CD4-positive, alpha-beta memory T cell (primary cell): ENCODE measurements at regions of chr2 and their contacts with region 1.

Region 1: DNA sequence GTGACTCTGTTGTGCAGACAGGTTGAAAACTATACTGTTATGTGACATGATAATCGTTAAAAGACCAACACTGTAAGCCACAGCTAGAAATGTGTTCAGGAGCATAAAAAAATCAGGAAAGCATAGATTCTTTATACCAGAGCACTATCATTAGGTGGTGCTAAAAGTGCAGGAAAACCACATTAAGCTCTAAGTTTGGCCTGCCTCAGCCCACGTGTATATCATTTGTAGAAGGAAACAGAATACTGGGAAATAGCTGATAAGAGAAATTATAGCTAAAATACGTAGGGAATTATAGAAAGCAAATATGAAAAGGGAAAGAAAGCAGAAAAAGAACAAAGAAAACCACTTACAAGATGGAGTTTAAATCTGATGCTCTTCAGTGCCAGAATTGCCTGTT is 26.5 kb upstream of the C2orf74 start:
- DNase-seq: peak in 4 of 5 donors; percentile 5 to 17 (median 10)
- H3K4me3 ChIP-seq: no peak overlapping the region
- H3K4me3 Mint-ChIP-seq: no peak overlapping the region
- H3K27ac ChIP-seq: no peak overlapping the region
- H3K27ac Mint-ChIP-seq: peak overlapping the region in 1 of 7 donors; percentile 62
- H3K4me1 ChIP-seq: no peaks in the 10 kb centered on the region
- H3K4me1 Mint-ChIP-seq: peaks cover 0 to 5% (median under 1%) of the 10 kb centered on the region in 4 donors
- H3K27me3 ChIP-seq: no peaks in the 10 kb centered on the region
- H3K27me3 Mint-ChIP-seq: no peaks in the 10 kb centered on the region

Region 2: GRCh38 chr2:61549546-61549945 is 414.0 kb after region 1 on chr2:
- CTCF ChIA-PET with region 1: no interaction called
- POLR2A ChIA-PET with region 1: no interaction called
- intact Hi-C with region 1: no loop called
- DNase-seq: no peak
- H3K4me3 ChIP-seq: no peak overlapping the region
- H3K4me3 Mint-ChIP-seq: no peak overlapping the region
- H3K27ac ChIP-seq: no peak overlapping the region
- H3K27ac Mint-ChIP-seq: peak overlapping the region in 1 of 7 donors; percentile 43
- H3K4me1 ChIP-seq: no peaks in the 10 kb centered on the region
- H3K4me1 Mint-ChIP-seq: no peaks in the 10 kb centered on the region
- H3K27me3 ChIP-seq: no peaks in the 10 kb centered on the region
- H3K27me3 Mint-ChIP-seq: peaks cover 0 to 1% of the 10 kb centered on the region in 2 donors

Region 3: DNA sequence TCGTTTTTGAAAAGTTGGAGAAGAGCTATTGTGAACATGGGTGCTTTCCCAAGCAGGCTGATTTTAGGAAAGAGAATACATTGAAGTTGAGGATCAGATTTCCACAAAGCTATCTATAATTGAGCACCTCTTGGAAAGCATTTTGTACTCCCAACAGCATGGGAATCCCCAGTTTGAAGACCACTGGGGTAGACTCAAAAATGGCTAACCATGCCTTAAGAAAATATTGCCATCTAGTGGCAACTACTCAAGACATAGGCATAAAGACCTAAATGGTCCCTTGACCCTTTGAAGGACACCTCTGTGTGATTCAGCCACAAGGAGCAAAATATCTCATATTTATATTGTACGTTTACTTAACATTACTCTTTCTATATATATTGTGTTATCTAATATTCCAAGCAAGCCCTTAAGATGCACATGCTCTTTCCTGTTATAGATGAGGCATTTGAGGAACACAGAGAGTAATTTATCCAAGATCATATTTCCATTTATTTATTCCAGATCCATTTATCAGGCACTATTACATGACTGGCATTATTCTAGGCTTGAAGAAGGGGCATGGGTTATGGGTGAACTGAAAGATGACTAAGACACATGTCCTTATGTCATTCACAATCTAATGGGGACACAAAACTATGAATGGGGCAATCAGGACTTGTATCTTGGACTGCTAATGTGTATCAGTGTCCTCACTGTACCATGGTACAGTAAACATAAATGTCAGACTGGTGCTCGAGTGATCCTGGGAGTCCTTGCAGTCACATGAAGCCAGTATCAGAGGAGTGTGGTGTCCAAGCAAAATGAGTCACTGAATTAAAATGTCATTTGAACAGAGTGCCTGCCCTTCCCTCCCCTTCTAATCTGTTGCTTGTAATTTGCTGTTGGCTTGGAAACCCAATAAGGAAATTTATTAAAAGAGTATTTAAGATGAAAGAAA is 523.6 kb after region 1 on chr2:
- CTCF ChIA-PET with region 1: interaction called, 3 read pairs
- POLR2A ChIA-PET with region 1: no interaction called
- intact Hi-C with region 1: loop called (anchors 10 kb)
- DNase-seq: peak in 1 of 5 donors; percentile 7
- H3K4me3 ChIP-seq: no peak overlapping the region
- H3K4me3 Mint-ChIP-seq: no peak overlapping the region
- H3K27ac ChIP-seq: no peak overlapping the region
- H3K27ac Mint-ChIP-seq: no peak overlapping the region
- H3K4me1 ChIP-seq: peaks cover 6% of the 10 kb centered on the region
- H3K4me1 Mint-ChIP-seq: peaks cover 0 to 7% (median 5%) of the 10 kb centered on the region in 4 donors
- H3K27me3 ChIP-seq: no peaks in the 10 kb centered on the region
- H3K27me3 Mint-ChIP-seq: no peaks in the 10 kb centered on the region